Activated T-helper 1 cell treated with anti-CD3 and anti-CD28 coated beads, Interleukin-12 subunit alpha, Interleukin-12 subunit beta, Interleukin-2, Interleukin-4 antibody, amounts not matched to agents 30 ng/mL and 10 ng/mL and 1 ng/mL, durations not matched to agents 14 hours and 24 hours and 36 hours (primary cell): ENCODE measurements at regions of chr17 and their contacts with region 1.

Region 1: GRCh38 chr17:54968262-54968987 is at the starts of genes COX11 and STXBP4:
- DNase-seq: peak; percentile 93
- H3K4me3 Mint-ChIP-seq: no peak within 1 kb of the TSS
- H3K27ac Mint-ChIP-seq: no peak within 1 kb of the TSS
- H3K4me1 Mint-ChIP-seq: peaks cover 20% of the 10 kb centered on the region
- H3K27me3 Mint-ChIP-seq: no peaks in the 10 kb centered on the region
- total RNA-seq, gene COX11: 45.0 and 51.3 TPM in 2 replicates
- total RNA-seq, gene STXBP4: 5.1 and 7.3 TPM in 2 replicates

Region 2: DNA sequence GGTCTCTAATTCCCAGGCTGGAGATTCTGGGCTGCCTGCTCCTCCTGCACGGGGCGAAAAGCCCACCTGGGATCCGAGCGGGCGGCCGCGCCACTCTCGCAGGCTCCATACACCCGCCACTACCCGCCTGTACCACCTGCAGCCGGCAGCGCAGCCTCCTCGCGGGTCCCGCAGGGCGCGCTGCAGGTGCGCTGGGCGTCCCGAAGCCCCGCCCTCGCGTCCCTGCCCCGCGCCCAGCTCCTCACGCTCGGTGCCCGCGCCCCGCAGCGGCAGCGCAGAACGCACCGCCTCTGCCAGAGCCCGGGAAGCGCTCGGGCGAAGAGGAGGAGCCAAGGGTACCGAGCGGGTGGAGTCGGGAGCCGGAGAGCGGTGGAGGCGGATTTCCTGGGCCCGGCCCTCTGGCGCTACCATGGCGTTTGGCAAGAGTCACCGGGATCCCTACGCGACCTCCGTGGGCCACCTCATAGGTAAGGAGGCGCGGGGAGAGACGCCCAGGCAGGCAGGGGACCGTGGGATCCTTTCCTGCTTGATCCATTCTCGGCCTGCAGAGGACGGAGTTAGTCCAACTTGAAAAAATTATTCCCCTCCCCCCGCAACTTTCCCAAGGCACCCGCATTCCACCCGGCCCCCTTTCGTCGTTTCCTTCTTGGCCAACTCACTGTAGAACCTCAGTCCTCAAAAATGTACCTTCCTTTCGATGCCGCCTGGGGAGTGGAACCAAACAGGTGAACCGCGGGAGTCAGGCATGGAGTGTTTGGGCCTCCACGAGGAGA is 67.8 kb before region 1 on chr17 and contains the start of gene TOM1L1:
- intact Hi-C with region 1: loop called (anchors 2 kb)
- DNase-seq: no peak
- H3K4me3 Mint-ChIP-seq: peak within 1 kb of the TSS; percentile 43
- H3K27ac Mint-ChIP-seq: no peak within 1 kb of the TSS
- H3K4me1 Mint-ChIP-seq: peaks cover 8% of the 10 kb centered on the region
- H3K27me3 Mint-ChIP-seq: peaks cover 25% of the 10 kb centered on the region
- total RNA-seq, gene TOM1L1: 0.32 and 0.41 TPM in 2 replicates

Region 3: DNA sequence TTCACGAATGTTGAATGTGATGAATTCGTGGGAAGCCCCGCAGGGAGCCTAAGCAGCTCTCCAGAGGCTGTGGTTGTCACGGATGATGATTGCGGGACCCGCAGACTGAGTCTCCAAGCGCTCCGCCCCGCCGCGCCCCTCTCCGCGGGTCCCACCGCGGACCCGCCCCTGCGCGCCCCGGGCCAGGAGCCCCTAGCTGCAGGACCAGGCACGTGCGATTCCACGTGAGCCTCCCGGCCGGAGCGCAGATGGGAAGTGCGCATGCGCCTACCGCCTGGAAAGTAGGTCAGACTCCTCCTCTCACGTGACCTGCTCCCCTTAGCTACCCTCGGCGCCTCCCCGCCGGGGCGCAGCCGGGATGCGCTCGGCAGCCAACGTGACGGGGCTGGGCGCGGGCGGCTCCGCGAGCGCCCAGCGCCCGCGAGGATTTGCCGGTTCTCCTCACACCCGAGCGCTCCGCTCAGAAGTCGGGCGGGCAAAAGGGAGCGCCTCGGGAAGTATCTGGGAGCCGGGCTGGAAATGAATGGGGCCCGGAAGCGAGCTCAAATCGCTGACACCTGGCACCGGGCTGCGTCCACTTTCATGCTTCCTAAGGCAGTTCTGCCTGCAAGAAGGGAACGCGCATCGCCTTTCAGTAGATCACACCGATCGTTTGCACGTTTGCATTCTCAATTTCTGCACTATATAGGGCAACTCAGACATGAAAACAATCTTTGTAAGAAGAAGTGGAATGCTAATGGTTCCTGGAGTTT is 269.9 kb after region 1 on chr17:
- intact Hi-C with region 1: loop called (anchors 1 kb)
- DNase-seq: peak; percentile 75
- H3K4me3 Mint-ChIP-seq: peak overlapping the region; percentile 81
- H3K27ac Mint-ChIP-seq: peak overlapping the region; percentile 69
- H3K4me1 Mint-ChIP-seq: peaks cover 17% of the 10 kb centered on the region
- H3K27me3 Mint-ChIP-seq: peaks cover 34% of the 10 kb centered on the region

Region 4: GRCh38 chr17:55295411-55296170 is 327.2 kb after region 1 on chr17:
- intact Hi-C with region 1: loop called (anchors 1 kb)
- DNase-seq: peak; percentile 32
- H3K4me3 Mint-ChIP-seq: no peak overlapping the region
- H3K27ac Mint-ChIP-seq: no peak overlapping the region
- H3K4me1 Mint-ChIP-seq: no peaks in the 10 kb centered on the region
- H3K27me3 Mint-ChIP-seq: peaks cover 6% of the 10 kb centered on the region

Region 5: GRCh38 chr17:55421179-55421934 is 452.9 kb after region 1 on chr17 and contains the start of gene MMD:
- intact Hi-C with region 1: loop called (anchors 1 kb)
- DNase-seq: no peak
- H3K4me3 Mint-ChIP-seq: peak within 1 kb of the TSS; percentile 93
- H3K27ac Mint-ChIP-seq: peak within 1 kb of the TSS; percentile 93
- H3K4me1 Mint-ChIP-seq: peaks cover 53% of the 10 kb centered on the region
- H3K27me3 Mint-ChIP-seq: peaks cover 19% of the 10 kb centered on the region
- total RNA-seq, gene MMD: 24.1 and 24.6 TPM in 2 replicates

Region 6: DNA sequence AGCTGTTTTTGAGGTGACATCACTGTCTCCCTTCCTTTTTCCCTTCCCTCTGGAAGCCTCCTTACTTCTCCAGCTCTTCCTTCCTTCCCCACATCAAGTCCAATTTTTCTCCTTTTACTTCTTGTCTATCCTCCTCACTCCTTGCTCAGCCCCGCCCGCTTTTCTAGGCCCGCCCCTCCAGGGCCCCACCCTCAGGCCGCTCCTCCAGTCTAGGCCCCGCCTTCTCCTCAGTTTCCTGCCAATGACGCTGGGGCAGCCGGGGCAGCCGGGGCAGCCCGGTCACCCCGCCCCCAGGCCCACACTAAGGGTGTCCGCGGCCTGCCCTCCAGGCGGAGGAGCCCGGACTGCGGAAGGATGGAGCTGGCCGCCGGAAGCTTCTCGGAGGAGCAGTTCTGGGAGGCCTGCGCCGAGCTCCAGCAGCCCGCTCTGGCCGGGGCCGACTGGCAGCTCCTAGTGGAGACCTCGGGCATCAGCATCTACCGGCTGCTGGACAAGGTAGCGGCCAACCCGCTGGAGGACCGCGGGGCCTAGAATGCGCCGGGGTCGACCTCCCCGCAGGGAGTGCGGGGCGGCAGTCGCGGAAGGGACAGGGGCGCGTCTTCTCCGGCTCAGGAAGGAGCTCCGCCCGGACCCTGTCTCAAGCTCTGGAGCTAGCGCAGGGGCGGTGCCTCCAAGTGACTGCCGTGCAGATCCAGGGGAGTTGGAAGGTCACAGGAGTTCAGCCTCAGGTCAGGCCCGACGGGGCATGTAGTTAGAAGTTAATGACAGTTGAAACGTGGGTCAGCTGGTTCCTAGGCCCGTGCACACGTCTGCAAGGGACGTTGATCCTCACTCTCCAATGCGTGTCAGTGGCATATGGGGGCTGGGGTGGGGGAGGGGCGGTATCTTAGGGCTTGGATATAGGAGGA is 782.6 kb after region 1 on chr17 and contains the start of gene PCTP:
- intact Hi-C with region 1: loop called (anchors 2 kb)
- DNase-seq: peak; percentile 85
- H3K4me3 Mint-ChIP-seq: peak within 1 kb of the TSS; percentile 87
- H3K27ac Mint-ChIP-seq: peak within 1 kb of the TSS; percentile 2
- H3K4me1 Mint-ChIP-seq: peaks cover 12% of the 10 kb centered on the region
- H3K27me3 Mint-ChIP-seq: peaks cover 23% of the 10 kb centered on the region
- total RNA-seq, gene PCTP: 7.7 and 8.4 TPM in 2 replicates